ENCODE measurements at regions of chr11 and their contacts with region 1.

Region 1: DNA sequence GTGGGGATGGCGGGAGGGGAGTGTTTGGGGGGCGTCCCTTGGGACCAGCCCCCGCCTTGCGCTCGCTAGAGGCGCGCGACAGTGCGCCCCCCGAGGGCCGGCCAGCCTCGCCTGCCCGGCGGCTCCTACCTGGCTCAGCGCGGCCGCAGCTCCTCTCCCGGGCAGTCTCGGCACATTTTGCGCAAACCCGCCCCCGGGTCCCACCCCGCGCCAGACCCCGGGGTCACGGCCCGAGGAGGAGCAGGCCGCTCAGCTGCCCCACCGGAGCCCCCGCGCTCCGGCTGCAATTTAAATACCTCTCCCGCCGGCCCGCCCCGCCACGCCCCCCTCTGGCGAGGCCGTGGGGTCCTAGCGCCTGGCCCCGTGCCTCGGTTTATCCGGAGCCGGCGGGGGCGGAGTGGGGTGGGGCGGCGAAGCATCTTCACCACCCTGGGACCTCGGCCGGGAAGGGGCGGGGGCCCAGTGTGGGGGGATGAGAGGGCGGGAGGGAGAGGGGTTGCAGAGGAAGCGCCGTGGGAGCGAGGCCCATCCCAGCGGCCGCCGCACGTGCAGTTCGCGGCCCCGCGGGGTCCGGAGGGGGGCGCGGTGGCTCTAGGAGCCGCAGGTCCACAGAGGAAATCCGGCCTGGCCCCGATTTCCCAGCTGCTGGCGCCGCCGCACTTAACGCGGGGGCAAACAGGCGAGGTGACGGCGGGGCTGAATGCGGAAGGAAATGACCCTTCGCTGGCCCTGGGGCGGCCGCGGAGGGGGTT is at the start of gene LRRC32:
- DNase-seq: peak; percentile 57
- H3K4me3 ChIP-seq: peak within 1 kb of the TSS; percentile 52 to 63 (median 56)
- H3K27ac ChIP-seq: peak within 1 kb of the TSS; percentile 54 to 75 (median 68)
- H3K4me1 ChIP-seq: peaks cover 6 to 30% (median 27%) of the 10 kb centered on the region in 4 donors
- H3K27me3 ChIP-seq: peaks cover 12% of the 10 kb centered on the region
- CTCF ChIP-seq: no peak
- EP300 ChIP-seq: no peak
- POLR2A ChIP-seq: peak; percentile 34
- total RNA-seq, gene LRRC32: 5.1 to 11.5 (median 9.1) TPM

Region 2: DNA sequence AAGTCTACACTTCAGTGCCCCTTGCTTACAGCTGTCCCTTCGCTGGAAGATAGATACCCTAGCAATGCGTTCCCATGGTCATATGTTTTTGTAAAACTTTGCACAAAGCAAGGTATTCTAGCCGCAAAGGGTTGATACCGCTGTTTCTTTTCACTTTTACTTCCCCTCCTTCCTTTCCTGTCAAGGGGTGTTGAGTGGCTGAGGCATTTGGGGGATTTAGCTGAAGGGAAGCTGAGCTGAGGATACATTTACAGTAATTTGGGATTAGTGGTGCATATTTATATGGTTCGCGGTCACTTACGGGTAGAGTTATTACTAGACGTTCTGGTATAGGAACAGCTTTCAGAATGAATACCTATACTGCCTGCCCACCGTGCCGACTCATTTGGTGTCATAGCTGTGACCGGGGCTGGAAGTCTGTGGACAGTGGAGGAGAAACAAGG is 377.5 kb before region 1 on chr11:
- in situ Hi-C with region 1: no loop called
- intact Hi-C with region 1: no loop called
- DNase-seq: no peak
- H3K4me3 ChIP-seq: no peak overlapping the region
- H3K27ac ChIP-seq: no peak overlapping the region
- H3K4me1 ChIP-seq: no peaks in the 10 kb centered on the region
- H3K27me3 ChIP-seq: no peaks in the 10 kb centered on the region
- CTCF ChIP-seq: no peak
- EP300 ChIP-seq: no peak
- POLR2A ChIP-seq: no peak

Region 3: DNA sequence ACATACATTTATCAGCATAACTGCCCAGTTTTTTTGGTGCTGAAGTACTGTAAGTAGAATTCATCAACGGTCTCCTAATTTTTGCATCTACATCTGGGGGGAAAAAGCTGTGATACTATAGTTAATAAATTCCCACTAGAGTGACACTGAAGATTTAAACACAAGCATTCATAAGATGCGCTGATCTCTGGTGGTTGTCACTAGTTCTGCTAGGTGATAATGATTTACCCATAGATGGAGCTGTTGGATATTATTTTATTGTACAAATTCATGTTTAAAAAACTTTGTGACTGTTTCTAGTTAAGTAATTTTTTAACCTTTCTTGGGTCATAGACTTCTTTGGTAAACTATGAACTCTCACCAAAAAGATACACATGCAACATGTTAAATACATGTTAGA is 119.3 kb before region 1 on chr11:
- in situ Hi-C with region 1: no loop called
- intact Hi-C with region 1: loop called (anchors 10 kb)
- DNase-seq: no peak
- H3K4me3 ChIP-seq: no peak overlapping the region
- H3K27ac ChIP-seq: no peak overlapping the region
- H3K4me1 ChIP-seq: peaks cover 0 to 24% (median 11%) of the 10 kb centered on the region in 4 donors
- H3K27me3 ChIP-seq: no peaks in the 10 kb centered on the region
- CTCF ChIP-seq: peak in 4 of 5 experiments; percentile 16 to 27 (median 22)
- EP300 ChIP-seq: no peak
- POLR2A ChIP-seq: no peak

Region 4: DNA sequence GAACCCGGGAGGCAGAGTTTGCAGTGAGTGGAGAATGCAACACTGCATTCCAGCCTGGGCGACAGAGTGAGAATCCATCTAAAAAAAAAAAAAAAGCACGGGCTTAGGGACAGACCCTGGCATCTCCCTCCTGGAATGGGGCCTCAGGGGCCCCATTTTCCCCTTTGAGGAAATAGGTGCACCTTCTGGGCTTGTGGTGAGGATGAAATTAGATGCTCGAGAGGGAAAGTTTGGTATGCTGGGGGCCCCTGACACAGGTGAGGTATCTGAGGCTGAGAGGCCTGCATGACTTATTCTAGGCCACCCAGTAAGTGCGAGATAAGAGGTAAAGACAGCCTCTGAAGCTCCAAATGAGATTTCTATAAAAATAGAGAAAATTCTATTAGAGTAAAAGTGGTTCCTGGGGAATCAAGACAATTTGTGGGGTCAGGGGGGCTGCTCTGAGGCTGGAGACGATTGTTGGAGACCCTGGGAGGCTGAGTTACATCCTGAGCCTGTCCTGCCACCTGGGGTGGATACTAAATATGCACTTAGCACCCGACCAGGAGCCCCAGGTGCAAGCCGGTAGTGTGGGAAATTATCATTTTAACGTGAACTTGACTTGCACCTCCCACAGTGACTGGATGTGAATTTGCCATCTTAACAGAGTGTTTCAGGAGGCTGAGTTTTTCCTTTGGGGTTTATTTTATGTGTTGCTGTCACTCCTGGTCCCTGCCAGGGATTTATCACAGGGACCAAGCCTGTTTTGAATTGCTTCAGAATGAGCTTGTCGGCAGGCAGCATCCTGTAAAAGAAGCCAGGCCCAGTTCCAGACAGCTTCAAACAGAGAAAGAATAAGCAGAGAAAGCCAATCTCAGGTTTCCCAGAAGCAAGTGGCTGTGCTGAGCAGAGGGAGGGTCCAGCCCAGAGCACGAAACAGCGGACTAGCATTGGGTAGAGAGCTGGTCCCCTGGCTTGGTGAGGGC is 64.1 kb after region 1 on chr11:
- in situ Hi-C with region 1: no loop called
- intact Hi-C with region 1: no loop called
- DNase-seq: no peak
- H3K4me3 ChIP-seq: no peak overlapping the region
- H3K27ac ChIP-seq: no peak overlapping the region
- H3K4me1 ChIP-seq: peaks cover 0 to 3% (median 0%) of the 10 kb centered on the region in 4 donors
- H3K27me3 ChIP-seq: no peaks in the 10 kb centered on the region
- CTCF ChIP-seq: no peak
- EP300 ChIP-seq: no peak
- POLR2A ChIP-seq: no peak

Region 5: DNA sequence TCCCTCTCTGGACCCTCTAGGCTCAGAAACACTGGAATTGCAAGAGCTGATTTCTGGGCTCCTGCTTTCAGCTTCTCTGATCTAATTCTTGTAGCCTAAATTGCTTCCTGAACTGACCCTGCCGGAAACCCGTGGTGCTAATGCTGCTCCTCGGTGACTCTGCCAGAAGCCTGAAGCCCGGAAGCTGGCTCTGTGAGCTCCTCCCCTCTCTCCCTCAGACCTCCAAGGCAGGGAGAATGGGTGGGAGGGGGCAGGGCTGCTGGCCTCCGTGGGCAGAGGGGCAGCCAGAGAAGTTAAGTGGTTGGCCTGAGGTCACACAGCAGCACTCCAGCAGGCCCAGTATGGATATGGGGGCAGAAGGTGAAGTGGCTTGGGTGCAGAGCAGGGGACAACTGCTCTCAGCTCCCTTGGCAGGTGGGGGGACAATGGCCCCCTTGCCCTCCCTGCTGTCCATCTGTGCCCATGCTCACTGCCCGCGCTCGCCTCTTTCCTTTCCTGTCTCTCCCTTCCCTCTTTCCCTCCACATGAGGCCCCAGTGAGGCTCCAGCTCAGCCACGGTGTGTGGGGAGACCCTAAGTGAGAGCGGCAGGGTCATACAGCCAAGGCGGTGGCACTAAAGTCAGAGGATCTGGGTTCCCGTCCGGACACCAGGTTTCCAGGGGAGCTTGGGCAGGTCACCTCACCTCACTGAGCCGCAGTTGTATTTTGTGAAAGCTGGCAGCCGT is 412.3 kb after region 1 on chr11:
- in situ Hi-C with region 1: no loop called
- intact Hi-C with region 1: no loop called
- DNase-seq: peak; percentile 69
- H3K4me3 ChIP-seq: no peak overlapping the region
- H3K27ac ChIP-seq: peak overlapping the region; percentile 81 to 94 (median 88)
- H3K4me1 ChIP-seq: peaks cover 38 to 78% (median 60%) of the 10 kb centered on the region in 4 donors
- H3K27me3 ChIP-seq: no peaks in the 10 kb centered on the region
- CTCF ChIP-seq: no peak
- EP300 ChIP-seq: no peak
- POLR2A ChIP-seq: no peak

Region 6: GRCh38 chr11:77287615-77288273 is 617.1 kb after region 1 on chr11:
- in situ Hi-C with region 1: no loop called
- intact Hi-C with region 1: no loop called
- DNase-seq: no peak
- H3K4me3 ChIP-seq: no peak overlapping the region
- H3K27ac ChIP-seq: no peak overlapping the region
- H3K4me1 ChIP-seq: no peaks in the 10 kb centered on the region
- H3K27me3 ChIP-seq: no peaks in the 10 kb centered on the region
- CTCF ChIP-seq: no peak
- EP300 ChIP-seq: no peak
- POLR2A ChIP-seq: no peak

Measured in transverse colon (tissue), 4 donors.